HCT116 (cell line): ENCODE measurements at regions of chr7 and their contacts with region 1.

Region 1: DNA sequence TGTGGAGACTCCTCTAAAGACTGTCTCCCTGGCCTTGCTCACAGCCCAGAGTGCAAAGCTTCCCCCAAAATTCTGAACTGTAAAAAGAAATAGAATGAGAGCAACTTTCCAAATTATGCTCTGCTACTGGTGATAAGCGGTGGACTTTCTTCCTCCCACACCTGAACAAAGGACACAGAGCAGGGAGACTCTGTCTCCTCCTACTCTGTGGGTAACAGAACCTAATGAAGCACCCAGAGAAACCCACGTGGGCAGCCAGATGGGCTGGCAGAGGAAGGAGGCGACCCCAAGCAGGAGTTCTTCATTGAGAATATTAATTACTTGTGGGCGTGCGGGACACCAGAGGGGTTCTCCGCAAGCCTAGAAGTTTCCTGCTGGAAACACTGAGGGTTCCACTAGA is 139.5 kb downstream of the KMT2E start:
- DNase-seq: no peak
- ATAC-seq: no peak
- H3K4me3 ChIP-seq: no peak overlapping the region
- H3K27ac ChIP-seq: no peak overlapping the region
- H3K4me1 ChIP-seq: peaks cover 0 to 14% of the 10 kb centered on the region in 2 experiments; a peak in 2 of 4 replicates
- H3K27me3 ChIP-seq: no peaks in the 10 kb centered on the region
- CTCF ChIP-seq: no peak
- POLR2A ChIP-seq: no peak
- RAD21 ChIP-seq: no peak

Region 2: DNA sequence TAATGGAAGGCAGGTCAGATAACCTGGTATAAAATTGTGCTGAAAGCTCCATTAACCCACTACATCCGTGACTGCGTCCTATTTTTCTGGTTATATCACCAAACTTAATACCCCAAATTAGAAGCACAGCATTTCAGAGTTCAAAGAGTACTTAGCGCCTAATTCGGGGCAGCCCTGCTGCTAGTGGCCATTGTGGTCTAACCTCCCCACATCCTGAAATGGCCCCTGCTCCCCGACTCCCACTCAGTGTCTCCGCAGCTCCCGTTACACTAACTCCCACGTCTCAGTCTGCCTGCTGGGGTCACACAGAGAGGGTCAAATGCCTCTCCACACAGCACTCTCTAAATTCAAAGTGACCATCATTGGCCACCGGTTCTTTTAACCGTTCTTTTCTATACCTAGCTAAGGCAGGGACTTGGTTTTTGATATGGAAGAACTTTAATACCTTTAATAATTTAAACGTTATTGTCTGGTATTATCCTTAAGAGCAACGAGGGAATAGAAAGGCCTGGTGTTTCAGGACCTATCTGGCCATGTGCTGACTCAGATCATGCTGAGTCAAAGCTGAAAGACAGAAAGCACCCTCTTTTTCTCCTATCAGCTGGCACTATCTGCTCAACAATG is 22.4 kb before region 1 on chr7:
- CTCF ChIA-PET with region 1: no interaction called
- POLR2A ChIA-PET with region 1: no interaction called
- RAD21 ChIA-PET with region 1: no interaction called
- intact Hi-C with region 1: no loop called
- DNase-seq: no peak
- ATAC-seq: no peak
- H3K4me3 ChIP-seq: no peak overlapping the region
- H3K27ac ChIP-seq: no peak overlapping the region
- H3K4me1 ChIP-seq: peaks cover 0 to 3% of the 10 kb centered on the region in 2 experiments; a peak in 1 of 4 replicates
- H3K27me3 ChIP-seq: no peaks in the 10 kb centered on the region
- CTCF ChIP-seq: no peak
- POLR2A ChIP-seq: no peak
- RAD21 ChIP-seq: no peak

Region 3: GRCh38 chr7:105429746-105430612 is 276.4 kb after region 1 on chr7:
- CTCF ChIA-PET with region 1: no interaction called
- POLR2A ChIA-PET with region 1: no interaction called
- RAD21 ChIA-PET with region 1: no interaction called
- intact Hi-C with region 1: loop called (anchors 2 kb)
- DNase-seq: peak; percentile 34
- ATAC-seq: peak; percentile 85
- H3K4me3 ChIP-seq: no peak overlapping the region
- H3K27ac ChIP-seq: no peak overlapping the region
- H3K4me1 ChIP-seq: no peaks in the 10 kb centered on the region
- H3K27me3 ChIP-seq: no peaks in the 10 kb centered on the region
- CTCF ChIP-seq: peak; percentile 51 to 76 (median 66)
- POLR2A ChIP-seq: no peak
- RAD21 ChIP-seq: peak; percentile 84

Region 4: GRCh38 chr7:105502173-105502572 is 348.6 kb after region 1 on chr7:
- CTCF ChIA-PET with region 1: no interaction called
- POLR2A ChIA-PET with region 1: no interaction called
- RAD21 ChIA-PET with region 1: no interaction called
- intact Hi-C with region 1: no loop called
- DNase-seq: no peak
- ATAC-seq: no peak
- H3K4me3 ChIP-seq: no peak overlapping the region
- H3K27ac ChIP-seq: no peak overlapping the region
- H3K4me1 ChIP-seq: no peaks in the 10 kb centered on the region
- H3K27me3 ChIP-seq: no peaks in the 10 kb centered on the region
- CTCF ChIP-seq: no peak
- POLR2A ChIP-seq: no peak
- RAD21 ChIP-seq: no peak

Region 5: DNA sequence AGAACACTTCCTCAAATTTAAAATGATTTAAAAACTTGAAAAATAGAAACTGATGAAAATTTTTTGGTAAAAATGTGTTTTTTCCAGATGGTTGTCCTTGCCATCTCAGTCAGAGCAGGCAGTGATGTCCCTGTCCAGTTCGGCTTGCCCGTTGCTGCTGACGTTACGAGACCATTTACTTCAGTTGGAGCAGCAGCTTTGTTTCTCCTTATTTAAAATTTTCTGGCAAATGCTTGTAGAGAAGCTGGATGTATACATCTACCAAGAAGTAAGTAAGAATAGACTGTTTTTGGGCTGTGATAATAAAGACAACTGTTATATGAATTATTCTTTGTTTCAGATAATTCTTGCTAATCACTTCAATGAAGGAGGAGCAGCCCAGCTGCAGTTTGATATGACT is 411.7 kb after region 1 on chr7:
- CTCF ChIA-PET with region 1: no interaction called
- POLR2A ChIA-PET with region 1: no interaction called
- RAD21 ChIA-PET with region 1: no interaction called
- intact Hi-C with region 1: no loop called
- DNase-seq: no peak
- ATAC-seq: no peak
- H3K4me3 ChIP-seq: no peak overlapping the region
- H3K27ac ChIP-seq: no peak overlapping the region
- H3K4me1 ChIP-seq: no peaks in the 10 kb centered on the region
- H3K27me3 ChIP-seq: no peaks in the 10 kb centered on the region
- CTCF ChIP-seq: no peak
- POLR2A ChIP-seq: no peak
- RAD21 ChIP-seq: no peak

Region 6: DNA sequence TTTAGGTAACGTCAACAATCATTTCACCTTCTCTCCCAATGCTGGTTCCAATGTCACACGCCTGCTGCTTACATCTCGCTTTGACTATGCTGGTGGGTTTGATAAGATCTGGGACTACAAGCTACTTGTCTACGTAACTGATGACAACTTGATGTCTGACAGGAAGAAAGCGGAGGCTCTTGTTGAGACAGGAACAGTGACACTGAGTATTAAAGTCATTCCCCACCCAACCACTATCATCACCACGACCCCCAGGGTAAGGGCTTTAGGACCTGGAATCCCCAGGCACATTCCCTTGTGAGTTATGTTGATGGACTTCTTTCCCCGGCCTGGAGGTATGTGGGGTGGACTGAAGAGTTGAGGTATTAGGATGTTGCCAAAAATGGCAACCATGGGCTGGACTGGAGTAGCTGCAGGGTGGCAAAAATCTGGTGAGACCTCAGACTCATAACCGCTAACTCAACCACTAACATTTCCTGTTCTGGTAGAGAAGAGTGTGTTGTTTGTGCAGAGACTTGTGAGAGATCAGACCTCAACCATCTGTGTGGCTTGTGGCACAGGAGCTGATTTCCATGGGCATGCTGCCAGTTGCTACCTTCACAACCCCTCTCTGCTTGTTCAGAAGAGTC is 868.8 kb after region 1 on chr7:
- CTCF ChIA-PET with region 1: no interaction called
- POLR2A ChIA-PET with region 1: no interaction called
- RAD21 ChIA-PET with region 1: no interaction called
- intact Hi-C with region 1: no loop called
- DNase-seq: no peak
- ATAC-seq: no peak
- H3K4me3 ChIP-seq: no peak overlapping the region
- H3K27ac ChIP-seq: no peak overlapping the region
- H3K4me1 ChIP-seq: no peaks in the 10 kb centered on the region
- H3K27me3 ChIP-seq: no peaks in the 10 kb centered on the region
- CTCF ChIP-seq: no peak
- POLR2A ChIP-seq: no peak
- RAD21 ChIP-seq: no peak